HepG2 (cell line): ENCODE measurements at regions of chr2 and their contacts with region 1.

Region 1: GRCh38 chr2:73561422-73561821 is 80.8 kb downstream of the NAT8 start:
- DNase-seq: no peak
- ATAC-seq: 0 out of 3 replicates have a peak, but pooled peaks have one; percentile 25
- H3K4me3 ChIP-seq: no peak overlapping the region
- H3K27ac ChIP-seq: no peak overlapping the region
- H3K4me1 ChIP-seq: no peaks in the 10 kb centered on the region
- H3K27me3 ChIP-seq: no peaks in the 10 kb centered on the region
- CTCF ChIP-seq: no peak
- EP300 ChIP-seq: no peak
- POLR2A ChIP-seq: no peak
- RAD21 ChIP-seq: no peak

Region 2: GRCh38 chr2:73516033-73516432 is 45.4 kb before region 1 on chr2:
- CTCF ChIA-PET with region 1: no interaction called
- POLR2A ChIA-PET with region 1: no interaction called
- in situ Hi-C with region 1: no loop called
- intact Hi-C with region 1: loop called (anchors 1 kb)
- DNase-seq: no peak
- ATAC-seq: no peak
- H3K4me3 ChIP-seq: no peak overlapping the region
- H3K27ac ChIP-seq: no peak overlapping the region
- H3K4me1 ChIP-seq: no peaks in the 10 kb centered on the region
- H3K27me3 ChIP-seq: no peaks in the 10 kb centered on the region
- CTCF ChIP-seq: no peak
- EP300 ChIP-seq: no peak
- POLR2A ChIP-seq: no peak
- RAD21 ChIP-seq: no peak

Region 3: GRCh38 chr2:74374509-74375205 is 813.2 kb after region 1 on chr2:
- CTCF ChIA-PET with region 1: no interaction called
- POLR2A ChIA-PET with region 1: no interaction called
- in situ Hi-C with region 1: no loop called
- intact Hi-C with region 1: no loop called
- DNase-seq: no peak
- ATAC-seq: no peak
- H3K4me3 ChIP-seq: no peak overlapping the region
- H3K27ac ChIP-seq: no peak overlapping the region
- H3K4me1 ChIP-seq: peaks cover under 1% of the 10 kb centered on the region
- H3K27me3 ChIP-seq: no peaks in the 10 kb centered on the region
- CTCF ChIP-seq: no peak
- EP300 ChIP-seq: no peak
- POLR2A ChIP-seq: no peak
- RAD21 ChIP-seq: no peak